CD14-positive monocyte (primary cell): ENCODE measurements at regions of chr20 and their contacts with region 1.

Region 1: GRCh38 chr20:53949319-53949889 is 121.0 kb downstream of the BCAS1 start:
- DNase-seq: peak; percentile 79 to 94 (median 89)
- H3K4me3 ChIP-seq: no peak overlapping the region
- H3K4me3 Mint-ChIP-seq: peak overlapping the region in 1 of 2 donors; percentile 66
- H3K27ac ChIP-seq: peak overlapping the region in 1 of 2 donors; percentile 66
- H3K27ac Mint-ChIP-seq: peak overlapping the region; percentile 67 to 85 (median 79)
- H3K4me1 ChIP-seq: peaks cover 18 to 20% of the 10 kb centered on the region in 2 donors
- H3K4me1 Mint-ChIP-seq: peaks cover 30% of the 10 kb centered on the region
- H3K27me3 ChIP-seq: no peaks in the 10 kb centered on the region
- H3K27me3 Mint-ChIP-seq: peaks cover 0 to 4% (median 2%) of the 10 kb centered on the region in 3 donors
- CTCF ChIP-seq: no peak

Region 2: GRCh38 chr20:54207743-54208547 is 258.5 kb after region 1 on chr20 and contains the start of gene PFDN4:
- intact Hi-C with region 1: loop called in 1 of 2 experiments (anchors 5 kb)
- DNase-seq: peak; percentile 70 to 78 (median 72)
- H3K4me3 ChIP-seq: peak within 1 kb of the TSS; percentile 66 to 94 (median 74)
- H3K4me3 Mint-ChIP-seq: peak within 1 kb of the TSS; percentile 81 to 97
- H3K27ac ChIP-seq: peak within 1 kb of the TSS; percentile 64 to 99
- H3K27ac Mint-ChIP-seq: peak within 1 kb of the TSS; percentile 98 to 100 (median 100)
- H3K4me1 ChIP-seq: peaks cover 20 to 24% of the 10 kb centered on the region in 2 donors
- H3K4me1 Mint-ChIP-seq: peaks cover 30% of the 10 kb centered on the region
- H3K27me3 ChIP-seq: no peaks in the 10 kb centered on the region
- H3K27me3 Mint-ChIP-seq: no peaks in the 10 kb centered on the region
- CTCF ChIP-seq: peak; percentile 82
- polyA plus RNA-seq, gene PFDN4: 12.6 to 49.0 (median 32.1) TPM